ENCODE measurements at regions of chr17 and their contacts with region 1.

Region 1: GRCh38 chr17:19766422-19767270 is 18.5 kb upstream of the ALDH3A1 start:
- DNase-seq: peak; percentile 75
- H3K4me3 ChIP-seq: no peak overlapping the region
- H3K27ac ChIP-seq: no peak overlapping the region
- H3K4me1 ChIP-seq: no peaks in the 10 kb centered on the region
- H3K27me3 ChIP-seq: no peaks in the 10 kb centered on the region
- CTCF ChIP-seq: peak; percentile 99

Region 2: GRCh38 chr17:18950944-18951349 is 815.7 kb before region 1 on chr17:
- CTCF ChIA-PET with region 1: no interaction called
- POLR2A ChIA-PET with region 1: no interaction called
- intact Hi-C with region 1: no loop called
- DNase-seq: peak; percentile 26
- H3K4me3 ChIP-seq: no peak overlapping the region
- H3K27ac ChIP-seq: no peak overlapping the region
- H3K4me1 ChIP-seq: no peaks in the 10 kb centered on the region
- H3K27me3 ChIP-seq: no peaks in the 10 kb centered on the region
- CTCF ChIP-seq: no peak

Region 3: GRCh38 chr17:19513897-19514488 is 252.7 kb before region 1 on chr17:
- CTCF ChIA-PET with region 1: interaction called, 6 read pairs
- POLR2A ChIA-PET with region 1: no interaction called
- intact Hi-C with region 1: loop called (anchors 2 kb)
- DNase-seq: peak; percentile 79
- H3K4me3 ChIP-seq: no peak overlapping the region
- H3K27ac ChIP-seq: no peak overlapping the region
- H3K4me1 ChIP-seq: no peaks in the 10 kb centered on the region
- H3K27me3 ChIP-seq: no peaks in the 10 kb centered on the region
- CTCF ChIP-seq: peak; percentile 94

Region 4: DNA sequence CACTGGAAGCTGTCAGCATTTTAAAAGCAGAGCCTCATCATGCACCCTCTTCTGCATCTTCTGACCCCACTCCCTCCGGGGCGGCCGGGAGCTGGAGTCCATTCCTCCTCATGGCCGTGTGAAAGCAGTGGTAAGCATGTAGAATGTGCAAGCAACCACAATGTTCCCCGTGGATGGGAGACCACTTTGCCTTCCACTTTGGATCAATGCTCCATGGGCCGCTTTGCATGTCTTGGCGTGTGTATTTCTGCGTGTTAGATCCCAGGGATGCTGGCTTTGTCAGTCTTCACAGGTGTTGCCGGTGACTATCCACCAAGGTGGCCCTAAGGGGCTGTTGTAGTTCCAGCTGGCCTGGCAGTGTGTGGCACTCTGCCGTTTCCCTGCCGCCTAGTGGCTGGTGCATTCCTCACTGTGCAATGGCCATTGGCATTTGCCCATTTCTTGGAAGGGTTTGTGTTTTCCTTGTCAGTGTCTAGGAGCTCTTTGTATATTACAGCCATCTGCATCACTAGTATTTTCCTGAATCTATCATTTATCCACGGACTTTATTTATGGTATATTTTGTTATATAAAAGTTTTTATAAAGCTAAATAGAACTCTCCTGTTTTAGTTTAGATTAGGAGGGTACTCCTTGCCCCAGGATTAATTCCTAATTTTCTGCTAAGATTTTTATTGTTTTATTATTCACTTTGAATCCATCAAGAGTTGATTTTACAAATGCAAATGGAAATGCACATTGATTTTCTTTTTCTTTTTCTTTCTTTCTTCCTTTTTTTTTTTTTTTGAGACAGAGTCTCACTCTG is 12.8 kb before region 1 on chr17:
- CTCF ChIA-PET with region 1: interaction called, 10 read pairs
- POLR2A ChIA-PET with region 1: no interaction called
- intact Hi-C with region 1: no loop called
- DNase-seq: peak; percentile 34
- H3K4me3 ChIP-seq: no peak overlapping the region
- H3K27ac ChIP-seq: no peak overlapping the region
- H3K4me1 ChIP-seq: no peaks in the 10 kb centered on the region
- H3K27me3 ChIP-seq: no peaks in the 10 kb centered on the region
- CTCF ChIP-seq: peak; percentile 74

Measured in A673 (cell line).